ENCODE measurements at regions of chr6 and their contacts with region 1.

Region 1: GRCh38 chr6:11496152-11497060 is 41.1 kb upstream of the TMEM170B start:
- DNase-seq: peak; percentile 92
- H3K4me3 ChIP-seq: no peak overlapping the region
- H3K27ac ChIP-seq: peak overlapping the region; percentile 42
- H3K4me1 ChIP-seq: peaks cover 5% of the 10 kb centered on the region
- H3K27me3 ChIP-seq: no peaks in the 10 kb centered on the region
- CTCF ChIP-seq: peak; percentile 67 to 71
- POLR2A ChIP-seq: no peak

Region 2: GRCh38 chr6:11093589-11094410 is 402.6 kb before region 1 on chr6 and contains the start of gene SMIM13:
- CTCF ChIA-PET with region 1: interaction called, 11 read pairs
- POLR2A ChIA-PET with region 1: no interaction called
- dilution Hi-C with region 1: no loop called
- intact Hi-C with region 1: loop called (anchors 1 kb)
- DNase-seq: peak; percentile 99
- H3K4me3 ChIP-seq: peak within 1 kb of the TSS; percentile 54 to 98 (median 86)
- H3K27ac ChIP-seq: peak within 1 kb of the TSS; percentile 87
- H3K4me1 ChIP-seq: peaks cover 18% of the 10 kb centered on the region
- H3K27me3 ChIP-seq: no peaks in the 10 kb centered on the region
- CTCF ChIP-seq: peak; percentile 38 to 47
- POLR2A ChIP-seq: peak; percentile 68
- total RNA-seq, gene SMIM13: 14.7 and 19.4 TPM in 2 replicates

Region 3: DNA sequence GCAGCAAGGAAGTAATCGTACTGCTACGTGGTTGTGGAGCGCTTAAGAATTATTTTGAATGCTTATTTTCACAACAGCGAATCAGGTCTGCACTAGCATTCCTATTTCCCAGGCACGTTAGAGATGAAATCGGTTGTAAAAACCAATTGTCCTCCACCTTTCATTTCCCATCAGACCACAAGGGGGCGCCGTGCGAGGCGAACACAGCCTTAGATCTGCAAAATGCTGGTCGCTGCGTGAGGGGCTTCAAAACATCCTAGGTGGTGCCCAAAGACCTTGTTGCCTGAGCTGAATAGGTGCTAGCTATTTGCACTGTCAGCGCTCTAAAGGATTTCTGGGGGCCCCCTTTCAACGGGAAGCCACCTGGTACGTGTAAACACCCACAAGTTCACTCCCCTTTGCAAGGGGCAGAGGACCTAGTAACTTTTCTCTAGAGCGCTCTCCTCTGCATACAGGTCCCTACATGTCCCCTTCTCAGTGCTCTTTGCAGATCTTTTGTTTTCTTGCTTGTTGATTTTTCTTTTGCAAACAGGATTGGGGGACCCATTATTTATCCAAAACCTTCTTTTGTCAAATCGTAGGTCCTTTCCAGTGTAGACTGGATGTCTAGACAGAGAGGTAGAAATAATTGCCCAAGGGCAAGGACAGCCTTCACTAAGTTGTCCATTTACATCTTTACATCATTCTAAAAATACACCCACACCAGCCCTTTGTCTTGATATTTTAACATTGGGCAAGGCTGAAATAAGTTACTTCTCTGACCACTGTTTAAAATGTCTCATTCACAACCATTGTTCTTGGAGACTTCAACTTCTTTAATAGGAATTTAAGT is 323.7 kb before region 1 on chr6:
- CTCF ChIA-PET with region 1: interaction called, 70 read pairs
- POLR2A ChIA-PET with region 1: no interaction called
- dilution Hi-C with region 1: no loop called
- intact Hi-C with region 1: loop called (anchors 1 kb)
- DNase-seq: peak; percentile 71
- H3K4me3 ChIP-seq: no peak overlapping the region
- H3K27ac ChIP-seq: no peak overlapping the region
- H3K4me1 ChIP-seq: no peaks in the 10 kb centered on the region
- H3K27me3 ChIP-seq: no peaks in the 10 kb centered on the region
- CTCF ChIP-seq: peak; percentile 78 to 82
- POLR2A ChIP-seq: no peak

Region 4: GRCh38 chr6:11232193-11232769 is 264.1 kb before region 1 on chr6 and contains the start of gene NEDD9:
- CTCF ChIA-PET with region 1: interaction called, 21 read pairs
- POLR2A ChIA-PET with region 1: interaction called, 4 read pairs
- dilution Hi-C with region 1: no loop called
- intact Hi-C with region 1: loop called (anchors 1 kb)
- DNase-seq: peak; percentile 98
- H3K4me3 ChIP-seq: peak within 1 kb of the TSS; percentile 69 to 93 (median 70)
- H3K27ac ChIP-seq: peak within 1 kb of the TSS; percentile 93
- H3K4me1 ChIP-seq: peaks cover 36% of the 10 kb centered on the region
- H3K27me3 ChIP-seq: no peaks in the 10 kb centered on the region
- CTCF ChIP-seq: no peak
- POLR2A ChIP-seq: peak; percentile 98
- total RNA-seq, gene NEDD9: 55.2 and 73.0 TPM in 2 replicates

Region 5: GRCh38 chr6:11366183-11366933 is 130.0 kb before region 1 on chr6:
- CTCF ChIA-PET with region 1: interaction called, 4 read pairs
- POLR2A ChIA-PET with region 1: no interaction called
- dilution Hi-C with region 1: no loop called
- intact Hi-C with region 1: loop called (anchors 1 kb)
- DNase-seq: peak; percentile 11
- H3K4me3 ChIP-seq: no peak overlapping the region
- H3K27ac ChIP-seq: peak overlapping the region; percentile 58
- H3K4me1 ChIP-seq: peaks cover 51% of the 10 kb centered on the region
- H3K27me3 ChIP-seq: no peaks in the 10 kb centered on the region
- CTCF ChIP-seq: no peak
- POLR2A ChIP-seq: no peak

Region 6: GRCh38 chr6:11404838-11405237 is 91.6 kb before region 1 on chr6:
- CTCF ChIA-PET with region 1: no interaction called
- POLR2A ChIA-PET with region 1: no interaction called
- dilution Hi-C with region 1: no loop called
- intact Hi-C with region 1: no loop called
- DNase-seq: no peak
- H3K4me3 ChIP-seq: no peak overlapping the region
- H3K27ac ChIP-seq: no peak overlapping the region
- H3K4me1 ChIP-seq: peaks cover 5% of the 10 kb centered on the region
- H3K27me3 ChIP-seq: no peaks in the 10 kb centered on the region
- CTCF ChIP-seq: no peak
- POLR2A ChIP-seq: no peak

Region 7: DNA sequence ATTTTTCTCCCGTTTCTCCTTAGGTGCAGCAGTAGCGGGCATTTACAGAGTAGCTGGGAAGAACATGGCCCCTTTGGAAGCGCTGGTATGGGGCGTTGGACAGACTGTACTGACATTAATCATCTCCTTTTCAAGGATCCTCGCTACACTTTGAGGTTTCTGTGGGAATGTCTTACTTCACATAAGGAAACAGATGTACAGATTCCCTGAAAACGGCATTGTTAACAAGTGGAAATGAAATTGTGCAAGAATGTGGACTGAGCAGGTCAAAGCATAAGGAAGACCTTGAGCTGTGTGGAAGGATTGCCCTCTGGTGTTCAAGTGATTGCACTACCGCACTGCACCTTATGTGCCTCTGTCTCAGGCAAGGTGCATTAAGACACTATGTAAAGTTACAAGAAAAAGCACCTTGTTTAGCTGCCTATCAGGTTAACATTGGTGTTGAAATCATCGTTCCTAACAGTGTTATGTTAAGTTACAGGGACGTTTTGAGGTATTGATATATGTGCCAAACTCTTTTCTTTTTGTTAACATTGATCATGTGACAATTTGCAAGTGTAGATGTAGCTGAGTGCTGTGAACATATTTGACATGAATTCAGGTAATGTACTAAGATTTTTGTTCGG is 79.1 kb after region 1 on chr6:
- CTCF ChIA-PET with region 1: interaction called, 19 read pairs
- POLR2A ChIA-PET with region 1: no interaction called
- dilution Hi-C with region 1: no loop called
- intact Hi-C with region 1: loop called (anchors 1 kb)
- DNase-seq: peak; percentile 84
- H3K4me3 ChIP-seq: peak overlapping the region in 1 of 3 experiments; percentile 32
- H3K27ac ChIP-seq: no peak overlapping the region
- H3K4me1 ChIP-seq: peaks cover 3% of the 10 kb centered on the region
- H3K27me3 ChIP-seq: no peaks in the 10 kb centered on the region
- CTCF ChIP-seq: peak; percentile 90 to 93
- POLR2A ChIP-seq: no peak